ENCODE measurements at regions of chr3 and their contacts with region 1.

Region 1: DNA sequence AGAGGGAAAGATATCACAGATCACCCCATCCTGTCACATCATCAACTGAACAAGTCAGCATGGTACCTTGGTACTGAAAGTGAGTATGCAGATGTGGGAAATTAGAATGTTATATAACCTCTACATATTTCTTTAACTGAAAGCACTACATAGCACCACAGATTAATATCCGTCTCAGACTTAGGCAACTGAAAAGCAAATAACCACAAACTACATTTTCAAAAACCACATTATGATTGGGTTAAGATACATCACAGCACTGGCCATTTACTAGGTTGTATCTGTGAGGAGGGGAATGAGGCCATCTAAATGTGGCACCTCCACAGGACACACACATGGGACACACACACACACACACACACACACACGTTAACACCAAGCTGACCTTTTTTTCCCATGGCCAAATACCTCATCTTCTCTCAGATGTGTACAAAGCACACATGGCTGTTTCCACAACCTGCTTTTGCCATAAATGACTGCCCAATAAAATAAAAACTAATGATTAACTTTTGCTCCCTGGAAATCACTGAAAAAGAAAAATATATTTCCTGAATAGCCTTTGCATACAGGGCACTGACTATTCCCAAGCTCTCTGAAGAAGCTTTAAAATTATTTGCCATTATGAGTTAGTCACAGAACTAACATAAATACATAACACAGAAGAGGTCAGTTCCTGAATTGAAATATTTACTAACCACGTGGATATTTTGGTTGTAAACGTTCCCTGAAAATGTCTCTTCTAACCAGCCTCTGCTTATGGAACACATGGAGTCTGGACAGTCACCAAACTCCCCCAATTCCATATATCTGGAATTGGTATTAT is 60.1 kb downstream of the SUMF1 start:
- DNase-seq: no peak
- H3K4me3 Mint-ChIP-seq: no peak overlapping the region
- H3K27ac Mint-ChIP-seq: peak overlapping the region; percentile 47
- H3K4me1 Mint-ChIP-seq: peaks cover 75% of the 10 kb centered on the region
- H3K27me3 Mint-ChIP-seq: no peaks in the 10 kb centered on the region

Region 2: GRCh38 chr3:4303187-4304123 is 103.5 kb before region 1 on chr3 and contains the start of gene SETMAR:
- intact Hi-C with region 1: no loop called
- DNase-seq: peak; percentile 75
- H3K4me3 Mint-ChIP-seq: peak within 1 kb of the TSS; percentile 90
- H3K27ac Mint-ChIP-seq: peak within 1 kb of the TSS; percentile 95
- H3K4me1 Mint-ChIP-seq: peaks cover 22% of the 10 kb centered on the region
- H3K27me3 Mint-ChIP-seq: peaks cover 4% of the 10 kb centered on the region
- total RNA-seq, gene SETMAR: 16.0 and 17.6 TPM in 2 replicates

Region 3: GRCh38 chr3:4387210-4388204 is 19.4 kb before region 1 on chr3:
- intact Hi-C with region 1: loop called (anchors 1 kb)
- DNase-seq: no peak
- H3K4me3 Mint-ChIP-seq: no peak overlapping the region
- H3K27ac Mint-ChIP-seq: peak overlapping the region; percentile 87
- H3K4me1 Mint-ChIP-seq: peaks cover 45% of the 10 kb centered on the region
- H3K27me3 Mint-ChIP-seq: no peaks in the 10 kb centered on the region

Region 4: GRCh38 chr3:4394048-4394447 is 12.9 kb before region 1 on chr3:
- intact Hi-C with region 1: loop called (anchors 1 kb)
- DNase-seq: no peak
- H3K4me3 Mint-ChIP-seq: no peak overlapping the region
- H3K27ac Mint-ChIP-seq: peak overlapping the region; percentile 76
- H3K4me1 Mint-ChIP-seq: peaks cover 51% of the 10 kb centered on the region
- H3K27me3 Mint-ChIP-seq: no peaks in the 10 kb centered on the region

Region 5: DNA sequence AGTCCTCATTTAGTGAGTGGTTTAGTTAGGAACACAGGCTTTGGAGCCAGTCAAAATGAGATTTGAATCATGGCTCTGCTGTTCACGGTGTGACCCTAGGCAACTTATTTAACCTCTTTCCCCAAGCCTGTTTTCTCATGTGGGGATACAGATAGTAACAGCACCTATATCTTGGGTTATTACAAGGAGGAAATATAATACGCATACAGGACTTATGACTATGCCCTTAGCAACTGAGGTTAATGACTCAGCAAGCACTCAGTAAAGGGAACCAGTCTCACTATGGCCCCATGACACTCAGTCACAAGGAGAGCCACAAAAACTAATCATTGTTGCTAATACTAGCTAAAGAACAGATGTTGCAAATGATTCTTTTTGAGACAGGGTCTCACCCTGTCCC is 14.2 kb after region 1 on chr3:
- intact Hi-C with region 1: loop called (anchors 1 kb)
- DNase-seq: no peak
- H3K4me3 Mint-ChIP-seq: no peak overlapping the region
- H3K27ac Mint-ChIP-seq: peak overlapping the region; percentile 69
- H3K4me1 Mint-ChIP-seq: peaks cover 43% of the 10 kb centered on the region
- H3K27me3 Mint-ChIP-seq: no peaks in the 10 kb centered on the region

Region 6: DNA sequence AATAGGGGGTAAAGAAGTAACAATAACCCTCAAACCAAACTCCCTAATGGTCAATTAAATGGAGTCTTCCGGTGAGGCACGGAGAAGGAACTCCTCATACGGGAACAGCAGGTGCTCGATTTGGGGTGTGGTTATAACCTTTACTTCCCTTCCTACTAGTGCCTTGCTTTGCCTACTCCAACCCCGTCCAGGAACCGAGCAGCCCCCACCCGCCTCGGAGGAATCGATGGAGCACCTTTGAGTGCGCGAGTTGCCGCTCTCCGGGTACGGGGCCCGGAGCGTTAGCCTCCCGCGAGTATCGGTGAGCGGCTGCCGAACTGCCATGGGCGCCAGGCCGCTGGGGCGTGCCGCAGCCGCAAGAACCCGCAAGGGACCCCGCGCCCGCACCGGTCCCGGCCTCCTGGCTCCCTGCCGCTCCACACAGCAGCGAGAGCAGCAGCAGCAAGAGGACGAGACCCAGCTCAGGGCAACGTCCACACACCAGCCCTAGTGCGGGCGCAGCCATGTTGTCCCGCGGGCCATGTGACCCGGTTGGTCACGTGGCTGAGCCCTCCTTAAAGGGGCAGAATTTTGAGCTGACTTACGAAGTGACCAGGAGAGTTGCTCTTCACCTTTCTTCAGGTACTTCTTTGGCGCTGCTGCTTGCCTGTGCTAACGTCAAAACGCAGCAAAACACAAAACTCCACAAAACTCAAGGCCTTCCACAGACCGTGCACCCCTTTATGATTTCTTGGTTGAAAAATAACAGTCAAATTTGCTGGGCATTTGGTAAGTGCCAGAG is 60.0 kb after region 1 on chr3 and contains the start of gene SUMF1:
- intact Hi-C with region 1: loop called (anchors 1 kb)
- DNase-seq: peak; percentile 67
- H3K4me3 Mint-ChIP-seq: peak within 1 kb of the TSS; percentile 95
- H3K27ac Mint-ChIP-seq: peak within 1 kb of the TSS; percentile 91
- H3K4me1 Mint-ChIP-seq: peaks cover 16% of the 10 kb centered on the region
- H3K27me3 Mint-ChIP-seq: peaks cover 3% of the 10 kb centered on the region
- total RNA-seq, gene SUMF1: 6.9 and 7.7 TPM in 2 replicates

Region 7: GRCh38 chr3:4597204-4597985 is 190.4 kb after region 1 on chr3:
- intact Hi-C with region 1: loop called (anchors 5 kb)
- DNase-seq: no peak
- H3K4me3 Mint-ChIP-seq: no peak overlapping the region
- H3K27ac Mint-ChIP-seq: no peak overlapping the region
- H3K4me1 Mint-ChIP-seq: peaks cover 44% of the 10 kb centered on the region
- H3K27me3 Mint-ChIP-seq: no peaks in the 10 kb centered on the region

Region 8: GRCh38 chr3:4850928-4851265 is 443.9 kb after region 1 on chr3:
- intact Hi-C with region 1: loop called (anchors 5 kb)
- DNase-seq: no peak
- H3K4me3 Mint-ChIP-seq: peak overlapping the region; percentile 28
- H3K27ac Mint-ChIP-seq: peak overlapping the region; percentile 97
- H3K4me1 Mint-ChIP-seq: peaks cover 81% of the 10 kb centered on the region
- H3K27me3 Mint-ChIP-seq: no peaks in the 10 kb centered on the region